ENCODE measurements at regions of chr20 and their contacts with region 1.

Region 1: DNA sequence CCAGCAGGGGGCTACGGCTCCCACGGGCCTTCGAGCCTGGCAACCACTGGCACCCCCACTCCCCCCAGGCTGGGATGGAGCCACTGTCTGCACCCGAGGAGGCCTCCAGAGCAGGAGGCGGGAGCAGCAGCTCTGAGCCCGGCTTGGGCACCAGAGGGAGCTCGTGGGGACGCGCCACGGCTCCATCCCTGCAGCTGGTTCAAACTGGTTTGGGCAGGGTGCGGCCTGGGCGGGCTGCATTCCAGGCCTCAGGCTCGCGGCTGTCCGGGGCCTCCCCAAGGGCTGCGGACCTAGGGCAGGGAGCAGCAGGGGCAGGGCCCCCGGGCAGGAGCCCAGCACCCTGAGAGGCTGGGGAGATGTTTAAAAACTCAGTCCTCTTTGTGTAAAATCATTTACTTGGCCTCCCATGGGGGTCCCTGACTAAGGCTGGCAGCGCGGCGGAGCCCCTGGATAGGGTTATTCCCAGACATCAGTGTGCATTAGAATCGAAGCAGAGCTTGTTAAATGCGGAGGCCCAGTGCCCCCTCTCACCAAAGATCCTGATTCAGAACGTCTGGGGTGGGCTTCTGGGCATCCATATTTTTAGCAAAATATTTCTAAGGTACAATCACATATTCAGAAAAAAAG is 4.1 kb upstream of the BCAS4 start:
- DNase-seq: peak; percentile 62 to 83 (median 68)
- H3K4me3 ChIP-seq: peak overlapping the region; percentile 55
- H3K4me3 Mint-ChIP-seq: peak overlapping the region in 2 of 7 donors; percentile 37 to 41
- H3K27ac ChIP-seq: peak overlapping the region; percentile 79
- H3K27ac Mint-ChIP-seq: peak overlapping the region in 7 of 8 donors; percentile 11 to 77 (median 61)
- H3K4me1 ChIP-seq: peaks cover 20% of the 10 kb centered on the region
- H3K4me1 Mint-ChIP-seq: peaks cover 9 to 21% (median 12%) of the 10 kb centered on the region in 3 donors
- H3K27me3 ChIP-seq: no peaks in the 10 kb centered on the region
- H3K27me3 Mint-ChIP-seq: no peaks in the 10 kb centered on the region

Region 2: GRCh38 chr20:50772420-50773185 is 18.2 kb before region 1 on chr20:
- CTCF ChIA-PET with region 1: no interaction called
- POLR2A ChIA-PET with region 1: no interaction called
- DNase-seq: no peak
- H3K4me3 ChIP-seq: no peak overlapping the region
- H3K4me3 Mint-ChIP-seq: no peak overlapping the region
- H3K27ac ChIP-seq: no peak overlapping the region
- H3K27ac Mint-ChIP-seq: peak overlapping the region in 1 of 8 donors; percentile 17
- H3K4me1 ChIP-seq: no peaks in the 10 kb centered on the region
- H3K4me1 Mint-ChIP-seq: no peaks in the 10 kb centered on the region
- H3K27me3 ChIP-seq: no peaks in the 10 kb centered on the region
- H3K27me3 Mint-ChIP-seq: peaks cover 5 to 8% of the 10 kb centered on the region in 2 donors

Region 3: DNA sequence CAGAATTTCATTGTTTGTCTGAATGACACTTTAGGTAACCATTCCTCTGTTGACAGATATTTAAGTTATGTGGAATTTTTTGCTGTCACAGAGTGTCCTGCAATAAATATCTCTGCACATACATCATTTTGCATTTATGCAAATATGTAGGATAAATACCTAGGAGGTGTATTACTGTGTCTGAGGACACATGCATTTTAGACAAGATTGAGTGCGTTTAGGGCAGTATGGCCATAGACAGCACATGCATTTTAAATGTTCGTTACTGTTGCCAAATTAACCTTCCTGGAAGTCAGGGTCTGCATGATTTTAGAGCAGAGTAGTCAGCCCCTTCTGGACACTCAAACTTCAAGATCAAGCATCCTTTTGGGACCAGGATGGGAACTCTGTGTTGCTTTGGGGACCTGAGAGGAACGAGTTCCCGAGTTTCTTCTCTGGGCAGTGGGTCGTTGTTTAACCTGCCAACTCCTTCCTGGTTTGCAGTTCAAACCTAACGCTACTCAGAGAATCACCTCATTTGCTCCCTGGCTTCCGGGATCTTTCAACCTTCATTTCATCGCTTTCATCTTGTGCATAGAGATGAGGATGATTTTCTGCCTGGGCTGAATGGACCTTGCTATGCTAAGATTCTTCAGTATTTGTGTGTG is 13.8 kb after region 1 on chr20:
- CTCF ChIA-PET with region 1: interaction called, 12 read pairs
- POLR2A ChIA-PET with region 1: interaction called, 7 read pairs
- DNase-seq: peak; percentile 4 to 68 (median 37)
- H3K4me3 ChIP-seq: peak overlapping the region; percentile 35
- H3K4me3 Mint-ChIP-seq: peak overlapping the region; percentile 10 to 81 (median 75)
- H3K27ac ChIP-seq: peak overlapping the region; percentile 10
- H3K27ac Mint-ChIP-seq: peak overlapping the region; percentile 78 to 98 (median 94)
- H3K4me1 ChIP-seq: peaks cover 17% of the 10 kb centered on the region
- H3K4me1 Mint-ChIP-seq: peaks cover 23 to 56% (median 27%) of the 10 kb centered on the region in 3 donors
- H3K27me3 ChIP-seq: no peaks in the 10 kb centered on the region
- H3K27me3 Mint-ChIP-seq: no peaks in the 10 kb centered on the region

Region 4: DNA sequence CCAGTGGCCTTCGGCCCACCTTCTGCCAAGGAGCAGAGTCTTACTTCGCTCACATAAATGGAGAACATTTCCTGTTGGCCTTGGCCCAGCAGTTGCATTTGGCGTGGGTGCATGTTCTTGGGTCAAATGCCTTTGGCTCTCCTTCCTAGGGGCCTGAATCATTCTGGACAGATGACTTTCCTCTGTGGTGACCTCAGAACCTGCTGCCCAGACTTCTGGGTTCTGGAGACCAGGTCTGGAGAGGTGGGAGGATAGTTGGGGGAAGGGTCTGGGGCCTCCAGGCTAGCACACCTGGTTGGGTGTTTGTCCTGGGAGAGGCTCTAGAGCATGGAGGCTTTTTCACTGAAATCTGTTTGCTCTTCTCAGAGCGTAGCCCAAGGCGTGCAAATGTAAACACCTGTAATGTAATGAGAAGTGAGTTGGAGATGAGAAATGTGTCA is 33.4 kb after region 1 on chr20:
- CTCF ChIA-PET with region 1: interaction called, 40 read pairs
- POLR2A ChIA-PET with region 1: interaction called, 22 read pairs
- DNase-seq: no peak
- H3K4me3 ChIP-seq: no peak overlapping the region
- H3K4me3 Mint-ChIP-seq: no peak overlapping the region
- H3K27ac ChIP-seq: no peak overlapping the region
- H3K27ac Mint-ChIP-seq: no peak overlapping the region
- H3K4me1 ChIP-seq: no peaks in the 10 kb centered on the region
- H3K4me1 Mint-ChIP-seq: peaks cover 10 to 35% (median 20%) of the 10 kb centered on the region in 3 donors
- H3K27me3 ChIP-seq: no peaks in the 10 kb centered on the region
- H3K27me3 Mint-ChIP-seq: no peaks in the 10 kb centered on the region

Region 5: GRCh38 chr20:50913690-50914375 is 123.1 kb after region 1 on chr20:
- CTCF ChIA-PET with region 1: interaction called, 13 read pairs
- POLR2A ChIA-PET with region 1: interaction called, 5 read pairs
- DNase-seq: no peak
- H3K4me3 ChIP-seq: no peak overlapping the region
- H3K4me3 Mint-ChIP-seq: peak overlapping the region in 4 of 7 donors; percentile 15 to 51 (median 46)
- H3K27ac ChIP-seq: no peak overlapping the region
- H3K27ac Mint-ChIP-seq: peak overlapping the region in 7 of 8 donors; percentile 29 to 83 (median 64)
- H3K4me1 ChIP-seq: peaks cover 70% of the 10 kb centered on the region
- H3K4me1 Mint-ChIP-seq: peaks cover 81 to 93% (median 93%) of the 10 kb centered on the region in 3 donors
- H3K27me3 ChIP-seq: no peaks in the 10 kb centered on the region
- H3K27me3 Mint-ChIP-seq: no peaks in the 10 kb centered on the region

Region 6: DNA sequence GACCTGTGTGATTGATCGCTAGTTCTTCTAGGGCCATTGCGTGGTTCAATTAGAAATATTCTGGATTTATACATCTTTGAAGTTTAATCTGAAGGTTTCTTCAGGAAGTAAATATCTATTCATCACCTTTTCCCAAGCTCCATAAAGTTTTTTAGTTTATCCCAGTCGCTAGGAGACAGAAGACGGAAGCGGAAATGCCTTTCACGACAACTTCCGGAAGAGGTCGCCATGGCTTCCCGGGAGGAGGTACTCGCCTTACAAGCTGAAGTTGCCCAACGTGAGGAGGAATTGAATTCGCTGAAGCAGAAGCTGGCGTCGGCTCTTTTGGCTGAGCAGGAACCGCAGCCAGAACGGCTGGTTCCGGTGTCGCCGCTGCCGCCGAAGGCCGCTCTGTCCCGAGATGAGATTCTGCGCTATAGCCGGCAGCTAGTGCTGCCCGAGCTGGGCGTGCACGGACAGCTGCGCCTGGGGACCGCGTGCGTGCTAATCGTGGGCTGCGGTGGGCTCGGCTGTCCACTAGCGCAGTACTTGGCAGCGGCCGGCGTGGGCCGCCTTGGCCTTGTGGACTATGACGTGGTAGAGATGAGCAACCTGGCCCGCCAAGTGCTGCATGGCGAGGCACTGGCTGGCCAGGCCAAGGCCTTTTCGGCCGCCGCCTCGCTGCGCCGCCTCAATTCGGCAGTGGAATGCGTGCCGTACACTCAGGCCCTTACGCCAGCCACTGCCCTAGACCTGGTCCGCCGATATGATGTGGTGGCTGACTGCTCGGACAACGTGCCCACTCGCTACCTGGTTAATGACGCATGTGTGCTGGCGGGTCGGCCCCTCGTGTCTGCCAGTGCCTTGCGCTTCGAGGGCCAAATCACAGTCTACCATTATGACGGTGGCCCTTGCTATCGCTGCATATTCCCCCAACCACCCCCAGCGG is 168.1 kb after region 1 on chr20 and contains the start of gene MOCS3:
- CTCF ChIA-PET with region 1: interaction called, 25 read pairs
- POLR2A ChIA-PET with region 1: interaction called, 26 read pairs
- DNase-seq: peak; percentile 77 to 92 (median 90)
- H3K4me3 ChIP-seq: peak within 1 kb of the TSS; percentile 91
- H3K4me3 Mint-ChIP-seq: peak within 1 kb of the TSS; percentile 95 to 98 (median 98)
- H3K27ac ChIP-seq: peak within 1 kb of the TSS; percentile 97
- H3K27ac Mint-ChIP-seq: peak within 1 kb of the TSS; percentile 99 to 100 (median 100)
- H3K4me1 ChIP-seq: peaks cover 34% of the 10 kb centered on the region
- H3K4me1 Mint-ChIP-seq: peaks cover 51 to 80% (median 68%) of the 10 kb centered on the region in 3 donors
- H3K27me3 ChIP-seq: no peaks in the 10 kb centered on the region
- H3K27me3 Mint-ChIP-seq: no peaks in the 10 kb centered on the region
- total RNA-seq, gene MOCS3: 7.9 to 8.1 TPM

Region 7: DNA sequence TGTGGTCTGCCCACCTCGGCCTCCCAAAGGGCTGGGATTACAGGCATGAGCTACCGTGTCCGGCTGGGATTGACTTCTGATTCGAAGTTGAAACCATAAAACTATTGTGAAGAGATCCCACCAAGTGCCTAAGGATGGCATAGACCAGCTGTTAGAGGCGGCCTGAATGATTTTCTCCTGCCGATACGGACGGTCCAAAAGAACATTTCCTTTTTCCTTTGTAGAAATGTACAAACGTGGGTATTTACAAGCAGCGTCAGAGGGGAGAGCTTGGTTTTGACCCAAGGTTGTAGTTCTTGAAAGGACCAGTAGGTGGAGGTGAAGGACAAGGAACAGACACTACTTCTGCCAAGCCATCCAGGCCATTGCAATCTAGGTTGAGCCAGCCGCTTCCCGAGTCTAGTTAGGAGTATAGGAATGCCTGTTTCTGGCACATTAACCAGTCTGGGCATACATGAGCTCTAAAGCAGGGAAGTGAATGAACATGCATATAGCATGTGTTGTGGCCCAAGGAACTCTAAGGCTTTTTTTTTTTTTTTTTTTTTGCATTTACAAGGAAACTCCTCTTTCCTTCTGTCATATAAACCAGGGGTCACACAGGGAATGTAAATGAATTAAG is 196.9 kb after region 1 on chr20:
- CTCF ChIA-PET with region 1: interaction called, 20 read pairs
- POLR2A ChIA-PET with region 1: interaction called, 3 read pairs
- DNase-seq: peak; percentile 35 to 69 (median 61)
- H3K4me3 ChIP-seq: no peak overlapping the region
- H3K4me3 Mint-ChIP-seq: no peak overlapping the region
- H3K27ac ChIP-seq: no peak overlapping the region
- H3K27ac Mint-ChIP-seq: no peak overlapping the region
- H3K4me1 ChIP-seq: no peaks in the 10 kb centered on the region
- H3K4me1 Mint-ChIP-seq: peaks cover 0 to 4% (median 3%) of the 10 kb centered on the region in 3 donors
- H3K27me3 ChIP-seq: peaks cover 6% of the 10 kb centered on the region
- H3K27me3 Mint-ChIP-seq: peaks cover 32 to 38% of the 10 kb centered on the region in 2 donors

Measured in CD8-positive, alpha-beta memory T cell (primary cell).